ENCODE measurements at regions of chr16 and their contacts with region 1.

Region 1: GRCh38 chr16:54985668-54986067 is 55.0 kb downstream of the IRX5 start:
- DNase-seq: no peak
- ATAC-seq: no peak
- H3K4me3 ChIP-seq: no peak overlapping the region
- H3K27ac ChIP-seq: no peak overlapping the region
- H3K4me1 ChIP-seq: no peaks in the 10 kb centered on the region
- H3K27me3 ChIP-seq: no peaks in the 10 kb centered on the region
- CTCF ChIP-seq: no peak
- POLR2A ChIP-seq: no peak
- RAD21 ChIP-seq: no peak

Region 2: DNA sequence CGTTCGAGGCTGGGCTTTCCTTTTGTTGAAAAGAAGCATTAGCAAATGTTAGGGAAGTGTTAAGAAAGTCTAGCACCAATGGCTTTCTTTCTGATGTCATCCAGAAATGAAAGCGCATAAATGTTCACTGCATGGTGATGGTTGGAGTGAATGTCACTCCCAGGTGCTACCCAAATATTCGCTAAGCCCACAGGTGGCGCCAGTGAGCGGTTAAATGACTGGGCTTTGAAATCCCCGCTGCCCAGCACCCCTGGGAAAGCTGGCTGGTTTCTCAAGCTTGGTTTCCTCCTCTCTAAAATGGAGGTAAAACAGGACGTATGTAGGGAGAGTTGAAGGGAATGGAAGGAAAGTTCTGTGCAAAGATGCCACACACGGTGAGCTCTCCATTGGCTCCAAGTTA is 49.4 kb after region 1 on chr16:
- CTCF ChIA-PET with region 1: no interaction called
- POLR2A ChIA-PET with region 1: no interaction called
- RAD21 ChIA-PET with region 1: no interaction called
- intact Hi-C with region 1: loop called (anchors 1 kb)
- DNase-seq: peak; percentile 19
- ATAC-seq: peak; percentile 89
- H3K4me3 ChIP-seq: no peak overlapping the region
- H3K27ac ChIP-seq: no peak overlapping the region
- H3K4me1 ChIP-seq: peaks cover 0 to 11% of the 10 kb centered on the region in 2 experiments; a peak in 2 of 4 replicates
- H3K27me3 ChIP-seq: no peaks in the 10 kb centered on the region
- CTCF ChIP-seq: peak; percentile 33 to 78 (median 73); a peak in 4 of 6 replicates
- POLR2A ChIP-seq: no peak
- RAD21 ChIP-seq: peak; percentile 59

Region 3: DNA sequence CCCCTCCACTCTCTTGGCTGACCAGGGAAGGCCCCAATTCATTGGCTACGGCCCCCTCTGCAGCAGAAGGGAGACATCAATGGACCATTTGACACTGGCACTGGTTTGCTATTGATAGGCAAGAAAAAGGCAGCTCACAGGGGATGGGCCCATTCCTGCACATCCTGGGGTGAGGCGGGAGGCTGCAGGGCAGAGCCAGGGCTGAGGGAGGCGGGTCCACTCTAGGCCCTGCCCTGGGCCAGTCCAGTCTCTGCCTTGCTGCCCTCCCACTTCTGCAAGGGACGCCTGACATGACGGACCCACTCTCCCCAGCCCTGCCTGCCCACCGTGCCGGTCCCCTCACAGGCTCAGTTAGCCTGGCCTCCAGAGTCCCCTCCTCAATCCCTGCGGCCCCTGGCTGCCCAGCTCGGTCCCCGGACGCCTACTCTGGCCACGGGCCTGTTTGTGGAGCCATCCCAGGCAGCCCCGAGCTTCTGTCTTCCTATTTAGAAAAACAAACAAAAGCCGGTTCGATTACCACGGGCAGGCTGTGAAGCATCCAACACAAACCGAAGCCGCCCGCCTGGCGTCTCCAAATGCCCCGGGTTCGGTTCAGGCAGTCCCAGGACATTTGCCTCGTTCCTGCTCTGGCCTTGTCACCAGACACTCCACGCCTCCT is 105.7 kb after region 1 on chr16:
- CTCF ChIA-PET with region 1: no interaction called
- POLR2A ChIA-PET with region 1: no interaction called
- RAD21 ChIA-PET with region 1: no interaction called
- intact Hi-C with region 1: no loop called
- DNase-seq: no peak
- ATAC-seq: no peak
- H3K4me3 ChIP-seq: no peak overlapping the region
- H3K27ac ChIP-seq: no peak overlapping the region
- H3K4me1 ChIP-seq: no peaks in the 10 kb centered on the region
- H3K27me3 ChIP-seq: peaks cover 14% of the 10 kb centered on the region; the same call in 1 of the 2 replicates
- CTCF ChIP-seq: no peak
- POLR2A ChIP-seq: no peak
- RAD21 ChIP-seq: no peak

Measured in HCT116 (cell line).